ENCODE measurements at regions of chr9 and their contacts with region 1.

Region 1: GRCh38 chr9:2872257-2872935 is 28.5 kb upstream of the PUM3 start:
- DNase-seq: peak; percentile 38
- H3K4me3 ChIP-seq: no peak overlapping the region
- H3K27ac ChIP-seq: no peak overlapping the region
- H3K4me1 ChIP-seq: no peaks in the 10 kb centered on the region
- H3K27me3 ChIP-seq: peaks cover 66% of the 10 kb centered on the region
- CTCF ChIP-seq: peak; percentile 58

Region 2: DNA sequence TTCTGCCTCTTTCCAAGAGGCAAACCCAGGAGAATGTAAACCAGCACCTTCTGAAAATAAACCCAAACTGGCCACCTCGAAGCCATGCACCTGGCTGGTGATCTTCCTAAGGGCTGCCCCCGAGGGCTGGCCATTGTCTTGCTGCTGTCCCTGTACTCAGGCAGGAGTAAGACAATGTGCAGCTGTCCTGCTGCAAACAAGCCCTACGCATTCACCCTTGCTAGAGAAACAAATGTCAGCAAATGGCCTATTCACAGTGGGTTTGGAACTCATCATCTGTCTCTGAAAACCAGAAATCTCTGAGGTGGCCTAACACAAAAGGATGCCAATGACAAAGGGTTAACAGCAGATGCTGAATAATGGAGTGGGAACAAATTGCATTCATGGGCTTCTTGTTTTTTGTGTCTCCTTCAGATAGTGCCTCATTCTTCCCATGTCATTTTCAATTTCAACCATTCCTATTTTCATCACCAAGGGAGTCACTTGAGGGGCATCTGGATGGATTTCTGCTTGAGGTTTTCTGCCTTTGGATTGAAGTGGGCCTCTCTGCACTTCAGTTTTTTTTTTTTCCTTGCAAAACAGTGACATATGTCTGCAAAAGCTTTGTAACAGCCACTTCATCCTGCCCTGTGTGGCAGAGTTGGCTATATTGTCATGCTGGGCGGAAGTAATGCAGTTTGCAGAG is 512.4 kb before region 1 on chr9:
- CTCF ChIA-PET with region 1: no interaction called
- POLR2A ChIA-PET with region 1: no interaction called
- intact Hi-C with region 1: no loop called
- DNase-seq: no peak
- H3K4me3 ChIP-seq: no peak overlapping the region
- H3K27ac ChIP-seq: no peak overlapping the region
- H3K4me1 ChIP-seq: no peaks in the 10 kb centered on the region
- H3K27me3 ChIP-seq: no peaks in the 10 kb centered on the region
- CTCF ChIP-seq: no peak

Region 3: GRCh38 chr9:3441197-3441816 is 568.9 kb after region 1 on chr9:
- CTCF ChIA-PET with region 1: no interaction called
- POLR2A ChIA-PET with region 1: no interaction called
- intact Hi-C with region 1: loop called (anchors 5 kb)
- DNase-seq: peak; percentile 76
- H3K4me3 ChIP-seq: no peak overlapping the region
- H3K27ac ChIP-seq: no peak overlapping the region
- H3K4me1 ChIP-seq: peaks cover 4% of the 10 kb centered on the region
- H3K27me3 ChIP-seq: no peaks in the 10 kb centered on the region
- CTCF ChIP-seq: peak; percentile 82

Region 4: GRCh38 chr9:3467593-3468219 is 595.3 kb after region 1 on chr9:
- CTCF ChIA-PET with region 1: interaction called, 11 read pairs
- POLR2A ChIA-PET with region 1: no interaction called
- intact Hi-C with region 1: no loop called
- DNase-seq: peak; percentile 81
- H3K4me3 ChIP-seq: no peak overlapping the region
- H3K27ac ChIP-seq: no peak overlapping the region
- H3K4me1 ChIP-seq: peaks cover 13% of the 10 kb centered on the region
- H3K27me3 ChIP-seq: no peaks in the 10 kb centered on the region
- CTCF ChIP-seq: peak; percentile 95

Region 5: GRCh38 chr9:4366591-4367330 is 1494.4 kb after region 1 on chr9:
- CTCF ChIA-PET with region 1: no interaction called
- POLR2A ChIA-PET with region 1: no interaction called
- intact Hi-C with region 1: loop called (anchors 5 kb)
- DNase-seq: peak; percentile 65
- H3K4me3 ChIP-seq: no peak overlapping the region
- H3K27ac ChIP-seq: no peak overlapping the region
- H3K4me1 ChIP-seq: no peaks in the 10 kb centered on the region
- H3K27me3 ChIP-seq: no peaks in the 10 kb centered on the region
- CTCF ChIP-seq: peak; percentile 76

Measured in A673 (cell line).